ENCODE measurements at regions of chr3 and their contacts with region 1.

Region 1: DNA sequence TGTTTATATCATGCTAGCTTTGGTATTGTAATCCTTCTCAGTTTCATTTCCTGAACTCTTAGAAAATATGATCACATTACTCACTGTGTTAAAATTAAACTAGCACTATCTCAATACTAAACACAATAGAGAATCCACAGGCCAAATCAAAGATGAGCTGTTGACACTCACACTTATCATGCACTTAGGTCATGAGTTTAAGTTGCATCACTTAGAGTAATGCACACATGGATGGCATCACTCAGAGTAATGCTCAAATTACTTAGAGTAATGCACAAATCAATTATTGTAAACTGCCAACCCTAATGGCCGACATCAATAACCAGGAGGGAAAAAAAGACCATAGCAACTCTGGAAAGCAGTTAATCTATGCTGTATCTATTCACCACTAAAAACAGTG is 40.0 kb upstream of the MCF2L2 start:
- H3K4me3 Mint-ChIP-seq: no peak overlapping the region
- H3K27ac Mint-ChIP-seq: no peak overlapping the region
- H3K4me1 Mint-ChIP-seq: peaks cover 8% of the 10 kb centered on the region
- H3K27me3 Mint-ChIP-seq: no peaks in the 10 kb centered on the region

Region 2: DNA sequence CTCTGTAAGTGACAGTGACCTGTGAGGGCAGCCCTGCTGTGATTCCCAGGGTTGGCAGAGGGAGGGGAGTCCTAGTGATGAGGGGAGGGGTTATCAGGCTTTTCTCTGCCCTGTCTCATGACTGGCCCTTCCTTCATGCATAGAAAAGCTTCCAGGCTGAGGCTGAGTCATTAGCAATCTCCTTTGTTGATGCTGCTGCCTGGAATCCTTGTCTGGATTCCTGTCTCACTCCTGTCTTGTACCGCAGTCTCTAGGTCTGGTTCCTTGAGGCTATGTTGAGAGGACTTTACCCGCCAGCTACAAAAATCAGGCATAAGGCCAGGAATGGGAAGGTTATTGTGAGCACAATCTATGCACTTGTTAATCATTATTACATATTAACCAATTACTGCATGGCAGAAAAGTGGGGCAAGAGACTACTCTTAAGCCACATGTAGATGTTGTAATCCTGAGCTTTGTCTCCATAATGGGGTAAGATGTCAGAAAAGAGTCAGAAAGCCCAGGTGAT is 79.9 kb after region 1 on chr3:
- intact Hi-C with region 1: no loop called
- H3K4me3 Mint-ChIP-seq: no peak overlapping the region
- H3K27ac Mint-ChIP-seq: no peak overlapping the region
- H3K4me1 Mint-ChIP-seq: peaks cover 70% of the 10 kb centered on the region
- H3K27me3 Mint-ChIP-seq: no peaks in the 10 kb centered on the region

Region 3: GRCh38 chr3:183560607-183561006 is 92.2 kb after region 1 on chr3:
- intact Hi-C with region 1: no loop called
- H3K4me3 Mint-ChIP-seq: no peak overlapping the region
- H3K27ac Mint-ChIP-seq: no peak overlapping the region
- H3K4me1 Mint-ChIP-seq: peaks cover 43% of the 10 kb centered on the region
- H3K27me3 Mint-ChIP-seq: no peaks in the 10 kb centered on the region

Region 4: DNA sequence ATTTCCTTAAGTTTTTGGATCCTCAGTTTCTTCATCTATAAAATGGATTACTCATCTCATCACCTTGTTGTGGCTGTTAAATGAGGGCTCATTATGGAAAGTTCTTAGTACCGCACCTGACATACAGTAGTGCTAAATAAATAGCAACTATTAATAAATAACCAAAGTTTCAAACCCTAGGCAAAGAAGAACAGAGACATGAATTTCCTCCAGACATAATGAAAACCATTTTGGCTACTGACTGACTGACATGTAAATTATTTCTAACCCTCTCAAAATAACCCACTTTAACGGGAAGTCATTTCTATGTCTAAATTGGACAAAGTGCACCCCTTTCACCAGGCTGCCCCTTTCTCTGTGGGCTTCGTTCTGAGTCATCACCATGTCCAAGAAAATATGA is 104.5 kb after region 1 on chr3:
- intact Hi-C with region 1: no loop called
- H3K4me3 Mint-ChIP-seq: no peak overlapping the region
- H3K27ac Mint-ChIP-seq: no peak overlapping the region
- H3K4me1 Mint-ChIP-seq: peaks cover 11% of the 10 kb centered on the region
- H3K27me3 Mint-ChIP-seq: peaks cover 9% of the 10 kb centered on the region

Region 5: GRCh38 chr3:183591881-183592521 is 123.6 kb after region 1 on chr3:
- intact Hi-C with region 1: loop called (anchors 1 kb)
- H3K4me3 Mint-ChIP-seq: peak overlapping the region; percentile 17
- H3K27ac Mint-ChIP-seq: peak overlapping the region; percentile 12
- H3K4me1 Mint-ChIP-seq: peaks cover 42% of the 10 kb centered on the region
- H3K27me3 Mint-ChIP-seq: no peaks in the 10 kb centered on the region

Region 6: DNA sequence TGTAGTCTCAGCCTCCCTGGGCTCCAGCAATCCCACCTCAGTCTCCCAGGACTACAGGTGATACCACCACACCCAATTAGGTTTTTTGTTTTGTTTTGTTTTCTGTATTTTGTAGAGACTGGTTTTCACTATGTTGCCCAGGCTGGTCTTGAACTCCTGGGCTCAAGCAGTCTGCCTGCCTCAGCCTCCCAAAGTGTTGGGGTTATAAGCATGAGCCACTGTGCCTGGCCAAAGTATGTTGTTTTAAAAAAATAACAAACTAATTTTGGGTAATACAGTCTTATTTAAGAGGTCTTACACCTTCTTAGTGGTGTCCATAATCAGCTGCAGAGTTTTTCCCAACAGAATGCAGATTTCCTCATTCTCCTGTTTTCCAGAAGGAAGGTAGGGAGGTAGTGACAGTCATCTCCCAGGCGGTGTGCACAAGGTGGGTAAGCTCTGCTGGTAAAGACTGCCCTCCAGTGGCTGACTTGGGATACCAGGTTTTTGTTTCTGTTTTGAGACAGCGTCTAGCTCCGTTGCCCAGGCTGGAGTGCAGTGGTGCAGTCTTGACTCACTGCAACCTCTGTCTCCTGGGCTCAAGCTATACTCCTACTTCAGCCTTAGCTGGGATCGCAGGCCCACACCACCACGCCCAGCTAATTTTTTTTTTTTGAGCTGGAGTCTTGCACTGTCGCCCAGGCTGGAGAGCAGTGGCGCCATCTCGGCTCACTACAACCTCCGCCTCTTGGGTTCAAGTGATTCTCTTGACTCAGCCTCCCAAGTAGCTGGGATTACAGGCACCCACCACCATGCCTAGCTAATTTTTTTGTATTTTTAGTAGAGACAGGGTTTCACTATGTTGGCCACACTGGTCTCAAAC is 298.6 kb after region 1 on chr3:
- intact Hi-C with region 1: loop called (anchors 2 kb)
- H3K4me3 Mint-ChIP-seq: no peak overlapping the region
- H3K27ac Mint-ChIP-seq: no peak overlapping the region
- H3K4me1 Mint-ChIP-seq: no peaks in the 10 kb centered on the region
- H3K27me3 Mint-ChIP-seq: no peaks in the 10 kb centered on the region

Region 7: GRCh38 chr3:184185461-184186308 is 717.3 kb after region 1 on chr3 and contains the start of gene ABCF3:
- intact Hi-C with region 1: no loop called
- H3K4me3 Mint-ChIP-seq: peak within 1 kb of the TSS; percentile 96
- H3K27ac Mint-ChIP-seq: peak within 1 kb of the TSS; percentile 94
- H3K4me1 Mint-ChIP-seq: peaks cover 76% of the 10 kb centered on the region
- H3K27me3 Mint-ChIP-seq: no peaks in the 10 kb centered on the region